Psoas muscle (tissue), 8 donors: ENCODE measurements at regions of chr11 and their contacts with region 1.

Region 1: GRCh38 chr11:36002196-36002595 is 58.3 kb downstream of the LDLRAD3 start:
- DNase-seq: peak; percentile 30 to 76
- ATAC-seq: peak; percentile 84 to 90 (median 84)
- H3K4me3 ChIP-seq: no peak overlapping the region
- H3K27ac ChIP-seq: no peak overlapping the region
- H3K4me1 ChIP-seq: peaks cover 8% of the 10 kb centered on the region
- H3K27me3 ChIP-seq: no peaks in the 10 kb centered on the region
- CTCF ChIP-seq: no peak

Region 2: GRCh38 chr11:35200811-35201341 is 801.3 kb before region 1 on chr11:
- intact Hi-C with region 1: loop called in 1 of 2 experiments (anchors 5 kb)
- DNase-seq: no peak
- ATAC-seq: no peak
- H3K4me3 ChIP-seq: no peak overlapping the region
- H3K27ac ChIP-seq: no peak overlapping the region
- H3K4me1 ChIP-seq: no peaks in the 10 kb centered on the region
- H3K27me3 ChIP-seq: no peaks in the 10 kb centered on the region
- CTCF ChIP-seq: no peak

Region 3: GRCh38 chr11:35427071-35427470 is 575.1 kb before region 1 on chr11:
- intact Hi-C with region 1: no loop called
- DNase-seq: no peak
- ATAC-seq: no peak
- H3K4me3 ChIP-seq: no peak overlapping the region
- H3K27ac ChIP-seq: no peak overlapping the region
- H3K4me1 ChIP-seq: no peaks in the 10 kb centered on the region
- H3K27me3 ChIP-seq: peaks cover 0 to 17% (median 4%) of the 10 kb centered on the region in 3 donors
- CTCF ChIP-seq: no peak